ENCODE measurements at regions of chr20 and their contacts with region 1.

Region 1: GRCh38 chr20:47272893-47273590 is 83.5 kb downstream of the ZMYND8 start:
- DNase-seq: peak; percentile 21
- H3K4me3 ChIP-seq: no peak overlapping the region
- H3K27ac ChIP-seq: peak overlapping the region; percentile 78
- H3K4me1 ChIP-seq: peaks cover 31% of the 10 kb centered on the region
- H3K27me3 ChIP-seq: no peaks in the 10 kb centered on the region
- CTCF ChIP-seq: peak; percentile 61 to 88 (median 71)

Region 2: DNA sequence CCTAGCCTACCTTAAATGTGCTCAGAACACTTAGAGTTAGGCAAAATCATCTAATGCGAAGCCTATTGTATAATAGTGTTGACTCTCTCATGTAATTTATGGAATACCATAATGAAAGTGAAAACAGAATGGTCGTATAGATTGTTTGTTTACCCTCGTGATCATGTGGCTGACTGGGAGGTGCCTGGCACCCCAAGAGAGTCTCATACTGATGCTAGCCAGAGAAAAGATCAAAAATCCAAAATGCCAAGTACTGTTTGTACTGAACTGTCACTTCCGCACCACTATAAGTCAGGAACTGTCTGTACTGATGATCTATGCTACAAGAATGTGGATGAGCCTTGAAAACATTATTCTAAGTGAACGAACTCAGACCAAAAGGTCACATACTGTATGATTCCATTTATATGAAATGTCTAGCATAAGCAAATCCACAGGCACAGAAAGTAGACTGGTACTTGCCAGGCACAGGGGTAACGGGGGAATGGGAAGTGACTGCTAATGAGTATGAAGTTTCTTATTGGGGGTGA is 61.0 kb after region 1 on chr20:
- dilution Hi-C with region 1: loop called (anchors 10 kb)
- DNase-seq: peak; percentile 85
- H3K4me3 ChIP-seq: peak overlapping the region; percentile 5 to 61 (median 27)
- H3K27ac ChIP-seq: peak overlapping the region; percentile 69
- H3K4me1 ChIP-seq: peaks cover 53% of the 10 kb centered on the region
- H3K27me3 ChIP-seq: no peaks in the 10 kb centered on the region
- CTCF ChIP-seq: no peak

Measured in keratinocyte (primary cell).